H1 (cell line): ENCODE measurements at regions of chr2 and their contacts with region 1.

Region 1: GRCh38 chr2:218979846-218980734 is 4.9 kb downstream of the FEV start:
- DNase-seq: peak in 1 of 2 experiments; percentile 97
- H3K4me3 ChIP-seq: peak overlapping the region in 2 of 4 experiments; percentile 12 to 48; a peak in 4 of 8 replicates
- H3K27ac ChIP-seq: no peak overlapping the region
- H3K4me1 ChIP-seq: peaks cover 0 to 25% (median 19%) of the 10 kb centered on the region in 4 experiments; a peak in 6 of 7 replicates
- H3K27me3 ChIP-seq: peaks cover 54 to 95% (median 79%) of the 10 kb centered on the region in 4 experiments
- CTCF ChIP-seq: peak in 2 of 3 experiments; percentile 94; a peak in 3 of 4 replicates
- EP300 ChIP-seq: no peak; a peak in 1 of 3 replicates
- POLR2A ChIP-seq: no peak
- RAD21 ChIP-seq: peak; percentile 79 to 83

Region 2: GRCh38 chr2:218876562-218877219 is 103.4 kb before region 1 on chr2:
- CTCF ChIA-PET with region 1: interaction called, 81 read pairs
- POLR2A ChIA-PET with region 1: interaction called, 9 read pairs
- DNase-seq: peak in 1 of 2 experiments; percentile 90
- H3K4me3 ChIP-seq: no peak overlapping the region
- H3K27ac ChIP-seq: no peak overlapping the region
- H3K4me1 ChIP-seq: peaks cover 0 to 42% (median 27%) of the 10 kb centered on the region in 4 experiments; a peak in 6 of 7 replicates
- H3K27me3 ChIP-seq: peaks cover 97 to 100% (median 99%) of the 10 kb centered on the region in 4 experiments
- CTCF ChIP-seq: peak in 2 of 3 experiments; percentile 94 to 96; a peak in 3 of 4 replicates
- EP300 ChIP-seq: no peak
- POLR2A ChIP-seq: no peak
- RAD21 ChIP-seq: peak; percentile 90 to 97

Region 3: DNA sequence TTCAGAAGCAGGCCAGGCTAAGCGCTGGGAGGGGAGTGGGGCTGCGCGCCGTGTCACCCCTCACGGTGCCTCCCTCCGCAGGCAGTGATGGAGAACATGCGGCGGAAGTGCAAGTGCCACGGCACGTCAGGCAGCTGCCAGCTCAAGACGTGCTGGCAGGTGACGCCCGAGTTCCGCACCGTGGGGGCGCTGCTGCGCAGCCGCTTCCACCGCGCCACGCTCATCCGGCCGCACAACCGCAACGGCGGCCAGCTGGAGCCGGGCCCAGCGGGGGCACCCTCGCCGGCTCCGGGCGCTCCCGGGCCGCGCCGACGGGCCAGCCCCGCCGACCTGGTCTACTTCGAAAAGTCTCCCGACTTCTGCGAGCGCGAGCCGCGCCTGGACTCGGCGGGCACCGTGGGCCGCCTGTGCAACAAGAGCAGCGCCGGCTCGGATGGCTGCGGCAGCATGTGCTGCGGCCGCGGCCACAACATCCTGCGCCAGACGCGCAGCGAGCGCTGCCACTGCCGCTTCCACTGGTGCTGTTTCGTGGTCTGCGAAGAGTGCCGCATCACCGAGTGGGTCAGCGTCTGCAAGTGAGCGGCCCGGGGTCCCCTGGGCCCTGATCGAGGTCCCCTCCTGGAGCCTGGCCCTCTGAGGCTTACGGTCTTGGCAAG is 87.3 kb before region 1 on chr2:
- CTCF ChIA-PET with region 1: interaction called, 35 read pairs
- POLR2A ChIA-PET with region 1: no interaction called
- DNase-seq: peak in 1 of 2 experiments; percentile 82
- H3K4me3 ChIP-seq: peak overlapping the region in 3 of 4 experiments; percentile 26 to 55 (median 32); a peak in 5 of 8 replicates
- H3K27ac ChIP-seq: no peak overlapping the region
- H3K4me1 ChIP-seq: peaks cover 3 to 46% (median 17%) of the 10 kb centered on the region in 4 experiments
- H3K27me3 ChIP-seq: peaks cover 80 to 95% (median 92%) of the 10 kb centered on the region in 4 experiments
- CTCF ChIP-seq: peak in 2 of 3 experiments; percentile 43 to 62; a peak in 2 of 4 replicates
- EP300 ChIP-seq: no peak
- POLR2A ChIP-seq: no peak
- RAD21 ChIP-seq: peak in 1 of 2 experiments; percentile 9; a peak in 1 of 4 replicates

Region 4: DNA sequence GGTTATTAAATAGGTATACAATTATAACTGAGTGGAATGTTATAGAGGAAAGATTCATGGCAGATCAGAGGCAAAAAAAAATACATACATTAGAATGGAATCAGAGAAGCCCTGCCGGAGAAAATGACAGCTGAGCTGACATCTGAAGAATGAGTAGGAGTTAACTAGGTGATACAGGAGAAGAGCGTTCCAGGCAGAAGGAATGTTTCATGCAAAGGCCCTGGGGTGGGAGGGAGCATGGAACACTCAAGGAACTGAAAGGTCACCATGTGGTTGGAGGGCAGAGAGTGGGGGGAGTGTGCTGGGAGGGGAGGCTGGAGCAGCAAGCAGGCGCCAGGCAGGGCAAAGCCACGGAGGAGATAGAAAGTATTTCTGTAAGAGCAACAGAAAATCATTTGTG is 52.2 kb before region 1 on chr2:
- CTCF ChIA-PET with region 1: no interaction called
- POLR2A ChIA-PET with region 1: no interaction called
- DNase-seq: no peak
- H3K4me3 ChIP-seq: no peak overlapping the region
- H3K27ac ChIP-seq: no peak overlapping the region
- H3K4me1 ChIP-seq: no peaks in the 10 kb centered on the region
- H3K27me3 ChIP-seq: no peaks in the 10 kb centered on the region
- CTCF ChIP-seq: no peak
- EP300 ChIP-seq: no peak
- POLR2A ChIP-seq: no peak
- RAD21 ChIP-seq: no peak

Region 5: GRCh38 chr2:218953481-218953881 is 26.6 kb before region 1 on chr2:
- CTCF ChIA-PET with region 1: interaction called, 34 read pairs
- POLR2A ChIA-PET with region 1: interaction called, 4 read pairs
- DNase-seq: peak in 1 of 2 experiments; percentile 69
- H3K4me3 ChIP-seq: no peak overlapping the region
- H3K27ac ChIP-seq: no peak overlapping the region
- H3K4me1 ChIP-seq: peaks cover 0 to under 1% (median 0%) of the 10 kb centered on the region in 4 experiments; a peak in 1 of 7 replicates
- H3K27me3 ChIP-seq: peaks cover 4 to 29% (median 15%) of the 10 kb centered on the region in 4 experiments
- CTCF ChIP-seq: peak; percentile 57 to 71 (median 65)
- EP300 ChIP-seq: no peak
- POLR2A ChIP-seq: no peak
- RAD21 ChIP-seq: peak in 1 of 2 experiments; percentile 19; a peak in 2 of 4 replicates

Region 6: DNA sequence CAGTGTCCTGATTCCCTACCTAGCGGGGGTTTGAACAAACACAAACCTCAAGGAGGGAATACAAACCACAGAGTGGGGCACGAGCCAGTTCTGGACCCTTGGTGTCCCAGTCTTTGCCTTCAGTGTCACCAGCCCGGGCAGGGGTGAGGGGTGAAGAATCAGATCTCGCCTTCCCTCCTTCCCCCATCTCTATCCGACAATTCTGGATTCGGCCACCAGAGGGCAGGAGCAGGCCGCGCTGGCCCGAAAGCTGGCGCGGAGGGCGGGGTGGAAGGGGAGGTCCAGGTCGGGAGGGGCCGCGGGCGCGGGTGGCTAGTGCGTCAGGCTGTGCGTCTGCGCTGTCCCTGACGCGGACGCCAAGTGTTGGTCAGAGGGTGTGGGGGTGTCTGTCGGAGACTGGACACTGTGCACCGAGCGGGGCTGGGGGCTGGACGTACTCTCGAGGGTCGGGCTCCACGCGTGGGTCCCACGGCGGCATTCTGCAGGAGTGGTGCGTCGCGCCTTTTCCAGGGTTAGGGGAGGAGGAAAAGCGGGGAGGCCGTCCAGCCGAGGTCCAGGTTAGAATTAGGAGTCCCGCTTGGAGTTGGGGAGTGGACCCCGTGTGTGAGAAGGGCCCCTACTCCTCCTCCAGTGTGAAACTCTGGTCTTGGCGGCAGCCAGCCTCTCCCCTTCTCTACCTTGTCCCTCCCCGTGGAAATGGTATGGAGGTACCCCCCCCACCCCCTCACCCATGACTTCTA is 16.1 kb after region 1 on chr2:
- CTCF ChIA-PET with region 1: interaction called, 284 read pairs
- POLR2A ChIA-PET with region 1: interaction called, 7 read pairs
- DNase-seq: peak in 1 of 2 experiments; percentile 99
- H3K4me3 ChIP-seq: peak overlapping the region in 3 of 4 experiments; percentile 27 to 49 (median 34); a peak in 4 of 8 replicates
- H3K27ac ChIP-seq: no peak overlapping the region
- H3K4me1 ChIP-seq: peaks cover 0 to 43% (median 26%) of the 10 kb centered on the region in 4 experiments; a peak in 6 of 7 replicates
- H3K27me3 ChIP-seq: peaks cover 98 to 100% (median 99%) of the 10 kb centered on the region in 4 experiments
- CTCF ChIP-seq: peak in 2 of 3 experiments; percentile 88; a peak in 3 of 4 replicates
- EP300 ChIP-seq: 0 out of 3 replicates have a peak, but pooled peaks of 1 of the 2 experiments have one; percentile 20
- POLR2A ChIP-seq: no peak
- RAD21 ChIP-seq: peak; percentile 79 to 89

Region 7: DNA sequence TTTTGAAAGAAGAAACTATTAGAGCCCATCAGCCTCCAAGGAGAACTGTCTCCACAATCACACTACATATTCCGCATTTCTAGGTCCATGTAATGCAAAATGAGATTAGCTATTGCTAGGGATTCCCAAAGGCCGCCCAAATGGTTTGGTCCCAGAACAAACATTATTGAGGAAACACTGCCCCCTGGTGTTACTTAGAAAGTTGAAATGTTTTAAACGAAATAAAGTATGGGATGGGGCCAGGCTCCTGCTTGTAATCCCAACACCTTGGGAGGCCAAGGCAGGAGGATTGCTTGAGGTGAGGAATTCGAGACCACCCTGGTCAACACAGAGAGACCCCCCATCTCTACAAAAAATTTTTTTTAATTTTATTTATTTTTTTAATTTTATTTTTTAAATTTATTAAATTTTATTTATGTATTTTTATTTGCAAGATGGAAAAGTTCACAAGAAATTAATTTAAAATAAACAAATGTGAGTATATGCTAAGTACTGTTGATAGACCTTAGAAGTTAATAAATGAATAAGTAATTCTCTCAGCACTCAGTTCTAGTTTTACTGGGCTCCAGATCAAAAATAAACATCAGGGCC is 175.1 kb after region 1 on chr2:
- CTCF ChIA-PET with region 1: interaction called, 14 read pairs
- POLR2A ChIA-PET with region 1: no interaction called
- DNase-seq: no peak
- H3K4me3 ChIP-seq: no peak overlapping the region
- H3K27ac ChIP-seq: no peak overlapping the region
- H3K4me1 ChIP-seq: peaks cover 0 to 5% (median 2%) of the 10 kb centered on the region in 4 experiments; a peak in 2 of 7 replicates
- H3K27me3 ChIP-seq: no peaks in the 10 kb centered on the region
- CTCF ChIP-seq: peak in 2 of 3 experiments; percentile 45 to 70; a peak in 3 of 4 replicates
- EP300 ChIP-seq: no peak
- POLR2A ChIP-seq: no peak
- RAD21 ChIP-seq: peak; percentile 79 to 87